Activated B cell treated with CpG ODN at 0.5 μM for 24 hours (primary cell): ENCODE measurements at regions of chr20 and their contacts with region 1.

Region 1: DNA sequence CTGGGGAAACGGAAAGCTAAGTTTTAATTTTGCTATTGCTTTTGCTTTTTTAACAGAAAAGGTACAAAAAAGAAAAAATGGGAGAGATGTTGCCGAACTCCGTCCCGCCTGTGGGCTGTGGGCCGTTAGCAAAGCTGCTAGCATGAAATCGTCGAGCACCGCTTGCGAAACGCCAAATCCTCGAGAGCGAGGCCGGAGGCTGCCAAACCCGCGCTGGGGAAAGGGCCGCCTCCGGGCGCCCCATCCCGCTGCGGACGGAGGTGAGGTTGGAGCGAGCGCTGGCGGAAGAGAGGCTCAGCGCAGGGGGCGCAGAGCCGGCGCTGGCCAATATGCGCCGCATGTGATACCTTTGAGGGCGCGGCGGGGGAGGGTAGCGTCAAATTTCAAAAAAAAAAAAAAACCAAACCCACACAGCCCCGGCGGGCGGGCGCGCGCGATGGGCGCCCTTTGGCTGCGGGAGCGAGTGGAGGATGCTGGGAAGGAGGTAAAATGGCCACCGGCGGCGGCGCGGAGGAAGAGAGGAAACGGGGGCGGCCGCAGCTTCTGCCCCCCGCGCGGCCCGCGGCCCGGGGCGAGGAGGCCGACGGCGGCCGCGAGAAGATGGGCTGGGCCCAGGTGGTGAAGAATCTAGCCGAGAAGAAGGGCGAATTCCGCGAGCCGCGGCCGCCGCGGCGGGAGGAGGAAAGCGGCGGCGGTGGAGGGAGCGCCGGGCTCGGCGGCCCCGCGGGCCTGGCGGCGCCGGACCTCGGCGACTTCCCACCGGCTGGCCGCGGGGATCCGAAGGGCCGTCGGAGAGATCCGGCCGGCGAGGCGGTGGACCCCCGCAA is at the start of gene ZCCHC3:
- DNase-seq: peak; percentile 82
- ATAC-seq: peak; percentile 88
- H3K4me3 Mint-ChIP-seq: peak within 1 kb of the TSS; percentile 98
- H3K27ac Mint-ChIP-seq: peak within 1 kb of the TSS; percentile 98
- H3K4me1 Mint-ChIP-seq: peaks cover 44% of the 10 kb centered on the region
- H3K27me3 Mint-ChIP-seq: no peaks in the 10 kb centered on the region
- CTCF ChIP-seq: no peak
- total RNA-seq, gene ZCCHC3: 25.9 and 28.1 TPM in 2 replicates

Region 2: DNA sequence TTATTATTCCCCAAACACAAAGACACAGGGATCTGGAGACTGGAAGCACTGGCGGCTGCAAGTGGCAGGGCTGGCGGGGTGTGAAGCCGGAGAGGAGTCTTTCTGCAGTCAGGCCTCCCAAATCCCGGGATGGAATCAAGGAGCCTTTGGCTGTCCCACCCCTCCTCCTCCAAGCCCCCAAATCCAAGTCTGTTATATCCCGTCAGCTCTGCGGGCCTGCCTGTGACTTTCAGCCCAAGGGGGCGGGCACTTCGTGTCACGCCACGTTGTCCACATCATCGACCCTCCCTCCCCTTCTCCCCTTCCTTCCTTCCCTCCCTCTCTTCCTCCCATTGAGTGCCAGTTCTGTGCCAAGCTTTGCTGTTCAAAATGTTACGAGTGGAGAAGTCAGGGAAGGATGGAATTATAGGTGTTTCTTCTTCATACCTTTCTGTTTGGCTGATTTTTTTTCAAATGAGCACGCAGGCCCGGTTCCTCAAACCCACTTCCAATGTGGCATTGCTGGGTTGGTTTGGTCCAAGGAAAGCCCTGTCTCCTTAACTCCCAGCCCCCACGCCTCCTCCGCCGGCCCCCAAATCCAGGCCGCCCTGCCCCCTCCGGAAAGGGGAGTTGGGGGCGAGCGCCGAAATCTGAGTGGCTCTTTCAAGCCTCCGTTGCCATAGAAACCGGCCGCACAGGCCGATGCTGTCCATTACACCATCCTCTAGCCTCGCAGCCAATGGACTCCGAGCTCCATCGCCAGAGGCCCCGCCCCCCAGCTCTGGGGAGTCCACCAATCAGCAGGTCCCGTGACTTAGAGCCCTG is 12.7 kb after region 1 on chr20:
- CTCF ChIA-PET with region 1: no interaction called
- POLR2A ChIA-PET with region 1: interaction called, 8 read pairs
- intact Hi-C with region 1: loop called (anchors 1 kb)
- DNase-seq: peak; percentile 77
- ATAC-seq: peak; percentile 100
- H3K4me3 Mint-ChIP-seq: peak overlapping the region; percentile 86
- H3K27ac Mint-ChIP-seq: peak overlapping the region; percentile 86
- H3K4me1 Mint-ChIP-seq: peaks cover 18% of the 10 kb centered on the region
- H3K27me3 Mint-ChIP-seq: no peaks in the 10 kb centered on the region
- CTCF ChIP-seq: no peak

Region 3: GRCh38 chr20:330233-331149 is 33.2 kb after region 1 on chr20:
- CTCF ChIA-PET with region 1: interaction called, 13 read pairs
- POLR2A ChIA-PET with region 1: interaction called, 79 read pairs
- intact Hi-C with region 1: no loop called
- DNase-seq: peak; percentile 34
- ATAC-seq: peak; percentile 51
- H3K4me3 Mint-ChIP-seq: peak overlapping the region; percentile 19
- H3K27ac Mint-ChIP-seq: peak overlapping the region; percentile 61
- H3K4me1 Mint-ChIP-seq: peaks cover 33% of the 10 kb centered on the region
- H3K27me3 Mint-ChIP-seq: no peaks in the 10 kb centered on the region
- CTCF ChIP-seq: peak; percentile 15